ENCODE measurements at regions of chr2 and their contacts with region 1.

Region 1: DNA sequence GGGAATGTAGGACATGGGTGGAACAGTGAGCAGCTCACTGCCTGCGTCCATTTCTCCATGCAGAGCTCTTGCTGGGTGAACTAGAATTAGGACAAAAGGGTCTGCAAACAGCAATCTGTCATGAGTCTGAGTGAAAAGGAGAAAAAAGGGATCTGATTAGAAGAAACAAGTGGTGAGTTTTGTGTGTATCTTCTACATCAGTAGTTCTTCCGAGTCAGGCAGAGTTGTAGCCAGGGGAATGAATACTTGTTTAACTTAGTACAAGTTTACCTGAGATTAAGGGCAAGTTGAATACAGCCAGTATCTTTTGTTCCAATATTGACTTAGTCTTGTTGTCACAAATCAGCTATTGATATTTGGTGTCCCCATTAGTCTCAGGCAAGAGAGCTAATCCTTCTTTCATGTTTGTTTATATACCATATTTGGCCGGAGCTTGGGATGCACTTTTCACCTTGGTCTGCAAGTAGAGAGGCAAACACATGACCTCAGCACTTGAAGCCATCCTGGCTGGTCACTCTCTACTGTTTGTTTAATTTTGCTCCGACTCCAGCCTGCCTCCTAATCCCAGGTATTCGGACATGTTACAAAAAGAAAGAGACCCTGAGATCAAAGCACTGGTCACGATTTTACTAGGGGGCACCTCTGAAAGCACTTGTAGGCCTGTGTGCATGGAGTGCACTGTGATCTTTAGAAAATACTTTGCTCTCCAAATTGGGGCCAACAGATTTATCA is 211.0 kb upstream of the NT5C1B start:
- DNase-seq: peak; percentile 65 to 69
- H3K4me3 ChIP-seq: no peak overlapping the region
- H3K4me3 Mint-ChIP-seq: no peak overlapping the region
- H3K27ac Mint-ChIP-seq: no peak overlapping the region
- H3K4me1 ChIP-seq: peaks cover 9% of the 10 kb centered on the region
- H3K4me1 Mint-ChIP-seq: no peaks in the 10 kb centered on the region
- H3K27me3 ChIP-seq: peaks cover 1% of the 10 kb centered on the region; the same call in 1 of the 2 replicates
- H3K27me3 Mint-ChIP-seq: peaks cover 16% of the 10 kb centered on the region
- CTCF ChIP-seq: no peak

Region 2: DNA sequence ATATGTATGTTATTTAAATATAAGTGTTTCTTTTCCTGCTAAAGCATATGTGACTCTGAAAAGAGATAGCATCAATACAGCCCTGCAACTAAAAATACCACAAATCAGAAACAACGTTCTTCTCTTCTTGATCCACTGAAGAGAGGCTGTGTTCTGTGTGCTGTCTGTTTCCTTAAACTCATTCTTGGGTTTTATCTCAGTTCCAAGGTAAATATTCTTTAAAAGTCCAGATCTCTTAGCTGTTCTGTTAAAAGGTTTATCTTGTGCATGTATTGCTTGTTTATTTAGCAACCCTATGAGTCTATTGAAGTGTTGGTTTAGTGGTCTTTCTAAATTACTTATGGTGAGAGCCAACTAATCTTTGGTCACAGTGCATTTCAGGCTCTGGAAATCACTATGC is 37.7 kb before region 1 on chr2:
- CTCF ChIA-PET with region 1: no interaction called
- POLR2A ChIA-PET with region 1: no interaction called
- intact Hi-C with region 1: loop called (anchors 5 kb)
- DNase-seq: no peak
- H3K4me3 ChIP-seq: no peak overlapping the region
- H3K4me3 Mint-ChIP-seq: no peak overlapping the region
- H3K27ac Mint-ChIP-seq: no peak overlapping the region
- H3K4me1 ChIP-seq: no peaks in the 10 kb centered on the region
- H3K4me1 Mint-ChIP-seq: no peaks in the 10 kb centered on the region
- H3K27me3 ChIP-seq: no peaks in the 10 kb centered on the region
- H3K27me3 Mint-ChIP-seq: peaks cover 3% of the 10 kb centered on the region
- CTCF ChIP-seq: no peak

Region 3: DNA sequence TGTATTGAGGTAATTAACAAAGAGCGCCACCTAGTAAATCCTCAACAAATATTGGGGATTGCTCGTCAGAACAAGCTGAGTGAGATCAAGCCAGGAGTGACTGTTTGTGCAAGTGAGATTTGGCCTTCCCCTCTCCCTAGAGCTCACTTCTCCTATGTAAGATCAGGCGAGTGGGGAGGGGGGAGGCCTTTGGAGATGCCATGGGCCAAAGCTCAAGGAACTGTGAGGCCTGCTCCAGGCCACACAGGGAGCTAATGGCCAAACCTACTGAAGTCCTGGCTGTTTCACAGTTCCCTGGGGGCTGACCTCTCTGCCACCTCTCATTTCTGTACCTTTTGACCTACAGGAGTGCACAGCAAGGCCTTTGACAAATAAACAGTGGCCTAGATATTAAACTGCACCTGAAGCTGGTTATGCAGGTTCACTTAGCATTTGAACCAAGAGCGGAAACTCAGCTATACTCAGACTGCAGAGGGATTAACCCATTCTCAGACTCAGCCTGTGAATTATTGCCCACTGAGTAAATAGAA is 23.9 kb after region 1 on chr2:
- CTCF ChIA-PET with region 1: no interaction called
- POLR2A ChIA-PET with region 1: no interaction called
- intact Hi-C with region 1: loop called (anchors 1 kb)
- DNase-seq: peak; percentile 69 to 76
- H3K4me3 ChIP-seq: no peak overlapping the region
- H3K4me3 Mint-ChIP-seq: no peak overlapping the region
- H3K27ac Mint-ChIP-seq: no peak overlapping the region
- H3K4me1 ChIP-seq: peaks cover 39% of the 10 kb centered on the region
- H3K4me1 Mint-ChIP-seq: peaks cover 25% of the 10 kb centered on the region
- H3K27me3 ChIP-seq: no peaks in the 10 kb centered on the region
- H3K27me3 Mint-ChIP-seq: no peaks in the 10 kb centered on the region
- CTCF ChIP-seq: no peak

Region 4: GRCh38 chr2:18834341-18834740 is 33.9 kb after region 1 on chr2:
- CTCF ChIA-PET with region 1: no interaction called
- POLR2A ChIA-PET with region 1: no interaction called
- intact Hi-C with region 1: loop called (anchors 1 kb)
- DNase-seq: no peak
- H3K4me3 ChIP-seq: no peak overlapping the region
- H3K4me3 Mint-ChIP-seq: no peak overlapping the region
- H3K27ac Mint-ChIP-seq: no peak overlapping the region
- H3K4me1 ChIP-seq: peaks cover 47% of the 10 kb centered on the region
- H3K4me1 Mint-ChIP-seq: peaks cover 30% of the 10 kb centered on the region
- H3K27me3 ChIP-seq: no peaks in the 10 kb centered on the region
- H3K27me3 Mint-ChIP-seq: no peaks in the 10 kb centered on the region
- CTCF ChIP-seq: no peak